ENCODE measurements at regions of chr17 and their contacts with region 1.

Region 1: GRCh38 chr17:78140169-78140976 is 5.8 kb upstream of the C17orf99 start:
- DNase-seq: peak; percentile 86 to 97
- ATAC-seq: peak; percentile 85 to 95 (median 85)
- H3K4me3 ChIP-seq: no peak overlapping the region
- H3K4me3 Mint-ChIP-seq: peak overlapping the region; percentile 79
- H3K27ac ChIP-seq: peak overlapping the region; percentile 37
- H3K27ac Mint-ChIP-seq: peak overlapping the region; percentile 91 to 94
- H3K4me1 ChIP-seq: peaks cover 93% of the 10 kb centered on the region
- H3K4me1 Mint-ChIP-seq: peaks cover 61 to 68% of the 10 kb centered on the region in 2 donors
- H3K27me3 ChIP-seq: no peaks in the 10 kb centered on the region
- H3K27me3 Mint-ChIP-seq: no peaks in the 10 kb centered on the region
- CTCF ChIP-seq: no peak

Region 2: DNA sequence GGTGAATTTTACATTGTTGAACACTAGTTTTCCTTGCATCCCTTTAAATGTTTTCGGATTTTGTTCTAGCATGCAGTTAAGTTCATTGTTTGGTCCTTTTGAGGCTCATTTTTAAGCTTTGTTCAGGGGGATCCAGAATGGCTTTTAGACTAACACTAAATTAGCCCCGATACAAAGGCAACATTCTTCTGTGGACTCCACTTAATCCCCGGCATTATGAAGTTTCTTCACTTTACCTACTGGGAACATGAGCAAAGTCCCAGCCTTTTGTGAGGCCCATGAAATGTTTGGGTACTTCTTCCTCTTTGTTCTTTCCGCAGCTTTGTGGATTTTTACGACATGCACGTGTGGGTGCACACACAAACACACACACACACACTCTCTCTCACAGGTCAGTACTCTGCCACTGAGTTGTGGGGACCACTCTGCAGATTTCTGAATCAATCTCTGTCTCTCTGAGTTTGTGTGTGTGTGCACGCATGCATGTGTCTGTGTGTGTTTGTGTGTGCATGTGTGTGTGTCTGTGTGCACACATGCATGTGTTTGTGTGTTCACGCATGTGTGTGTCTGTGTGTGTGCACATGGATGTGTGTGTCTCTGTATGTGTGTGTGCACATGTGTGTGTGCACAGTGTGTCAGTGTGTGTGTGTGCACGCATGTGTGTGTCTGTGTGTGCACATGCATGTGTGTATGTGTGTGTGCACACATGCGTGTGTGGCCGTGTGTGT is 422.3 kb before region 1 on chr17:
- intact Hi-C with region 1: no loop called
- DNase-seq: no peak
- ATAC-seq: peak in 1 of 3 donors; percentile 38
- H3K4me3 ChIP-seq: no peak overlapping the region
- H3K4me3 Mint-ChIP-seq: no peak overlapping the region
- H3K27ac ChIP-seq: no peak overlapping the region
- H3K27ac Mint-ChIP-seq: no peak overlapping the region
- H3K4me1 ChIP-seq: no peaks in the 10 kb centered on the region
- H3K4me1 Mint-ChIP-seq: peaks cover 0 to 7% of the 10 kb centered on the region in 2 donors
- H3K27me3 ChIP-seq: no peaks in the 10 kb centered on the region
- H3K27me3 Mint-ChIP-seq: peaks cover 26 to 31% of the 10 kb centered on the region in 2 donors
- CTCF ChIP-seq: no peak

Region 3: GRCh38 chr17:78214706-78215061 is 74.3 kb after region 1 on chr17:
- intact Hi-C with region 1: loop called (anchors 1 kb)
- DNase-seq: no peak
- ATAC-seq: no peak
- H3K4me3 ChIP-seq: no peak overlapping the region
- H3K4me3 Mint-ChIP-seq: peak overlapping the region; percentile 76
- H3K27ac ChIP-seq: no peak overlapping the region
- H3K27ac Mint-ChIP-seq: no peak overlapping the region
- H3K4me1 ChIP-seq: peaks cover 9% of the 10 kb centered on the region
- H3K4me1 Mint-ChIP-seq: peaks cover 0 to 9% of the 10 kb centered on the region in 2 donors
- H3K27me3 ChIP-seq: no peaks in the 10 kb centered on the region
- H3K27me3 Mint-ChIP-seq: no peaks in the 10 kb centered on the region
- CTCF ChIP-seq: no peak

Region 4: GRCh38 chr17:78838574-78839005 is 698.2 kb after region 1 on chr17:
- intact Hi-C with region 1: no loop called
- DNase-seq: no peak
- ATAC-seq: no peak
- H3K4me3 ChIP-seq: no peak overlapping the region
- H3K4me3 Mint-ChIP-seq: peak overlapping the region; percentile 89
- H3K27ac ChIP-seq: no peak overlapping the region
- H3K27ac Mint-ChIP-seq: peak overlapping the region; percentile 92 to 96
- H3K4me1 ChIP-seq: peaks cover 25% of the 10 kb centered on the region
- H3K4me1 Mint-ChIP-seq: peaks cover 23 to 47% of the 10 kb centered on the region in 2 donors
- H3K27me3 ChIP-seq: no peaks in the 10 kb centered on the region
- H3K27me3 Mint-ChIP-seq: no peaks in the 10 kb centered on the region
- CTCF ChIP-seq: no peak